ENCODE measurements at regions of chr14 and their contacts with region 1.

Region 1: GRCh38 chr14:70600382-70601157 is at the start of gene MED6:
- DNase-seq: peak; percentile 95
- ATAC-seq: peak; percentile 100
- total RNA-seq, gene MED6: 16.7 to 20.6 TPM

Region 2: DNA sequence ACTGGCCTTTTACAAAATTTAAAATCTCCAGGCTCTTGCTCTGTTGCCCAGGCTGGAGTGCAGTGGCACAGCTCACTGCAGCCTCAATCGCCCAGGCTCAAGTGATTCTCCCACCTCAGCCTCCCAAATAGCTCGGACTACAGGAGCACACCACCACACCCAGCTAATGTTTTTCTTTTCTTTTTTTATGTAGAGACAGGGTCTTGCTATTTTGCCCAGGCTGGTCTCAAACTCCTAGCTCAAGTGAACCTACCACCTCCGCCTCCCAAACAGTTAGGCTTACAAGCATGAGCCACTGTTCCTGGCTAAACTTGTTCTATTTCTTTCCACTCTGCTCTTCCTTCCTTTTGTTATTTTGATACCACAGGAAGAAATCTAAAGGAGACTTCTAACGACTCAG is 198.9 kb before region 1 on chr14:
- intact Hi-C with region 1: no loop called
- DNase-seq: no peak
- ATAC-seq: no peak

Region 3: GRCh38 chr14:70655110-70655826 is 54.7 kb after region 1 on chr14:
- intact Hi-C with region 1: no loop called
- DNase-seq: no peak
- ATAC-seq: peak; percentile 48 to 72

Region 4: DNA sequence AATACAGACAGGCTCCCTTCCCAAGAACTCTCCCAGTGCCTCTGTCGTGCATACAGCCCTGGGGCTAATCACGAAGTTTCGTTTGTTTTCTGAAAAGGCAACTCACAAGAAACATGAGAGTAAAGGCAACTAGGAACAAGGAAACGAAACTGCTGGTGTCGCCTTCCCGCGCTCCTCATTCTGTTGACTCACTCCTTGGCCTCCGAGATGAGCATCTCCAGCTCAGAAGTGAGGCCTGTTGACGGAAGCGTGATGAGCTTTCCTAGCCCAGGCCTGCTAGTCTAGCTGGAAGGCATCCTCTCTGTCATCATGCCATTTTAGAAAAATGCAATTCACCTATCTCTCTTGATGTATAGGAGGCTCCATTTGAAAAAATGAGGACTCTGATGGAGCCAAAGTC is 91.7 kb after region 1 on chr14:
- intact Hi-C with region 1: no loop called
- DNase-seq: peak; percentile 25
- ATAC-seq: peak in 1 of 2 donors; percentile 53

Region 5: GRCh38 chr14:70714055-70714621 is 113.6 kb after region 1 on chr14:
- intact Hi-C with region 1: no loop called
- DNase-seq: peak; percentile 49
- ATAC-seq: peak; percentile 24 to 44

Region 6: GRCh38 chr14:70809543-70810244 is 209.1 kb after region 1 on chr14:
- intact Hi-C with region 1: loop called in 1 of 2 experiments (anchors 10 kb)
- DNase-seq: peak; percentile 89
- ATAC-seq: peak; percentile 93 to 97

Measured in left cardiac atrium (tissue), 4 donors.